Activated CD4-positive, alpha-beta T cell treated with anti-CD3 and anti-CD28 coated beads, Interleukin-2, amount 10 ng/mL, durations not matched to agents 24 days and 14 days (primary cell): ENCODE measurements at regions of chr10 and their contacts with region 1.

Region 1: DNA sequence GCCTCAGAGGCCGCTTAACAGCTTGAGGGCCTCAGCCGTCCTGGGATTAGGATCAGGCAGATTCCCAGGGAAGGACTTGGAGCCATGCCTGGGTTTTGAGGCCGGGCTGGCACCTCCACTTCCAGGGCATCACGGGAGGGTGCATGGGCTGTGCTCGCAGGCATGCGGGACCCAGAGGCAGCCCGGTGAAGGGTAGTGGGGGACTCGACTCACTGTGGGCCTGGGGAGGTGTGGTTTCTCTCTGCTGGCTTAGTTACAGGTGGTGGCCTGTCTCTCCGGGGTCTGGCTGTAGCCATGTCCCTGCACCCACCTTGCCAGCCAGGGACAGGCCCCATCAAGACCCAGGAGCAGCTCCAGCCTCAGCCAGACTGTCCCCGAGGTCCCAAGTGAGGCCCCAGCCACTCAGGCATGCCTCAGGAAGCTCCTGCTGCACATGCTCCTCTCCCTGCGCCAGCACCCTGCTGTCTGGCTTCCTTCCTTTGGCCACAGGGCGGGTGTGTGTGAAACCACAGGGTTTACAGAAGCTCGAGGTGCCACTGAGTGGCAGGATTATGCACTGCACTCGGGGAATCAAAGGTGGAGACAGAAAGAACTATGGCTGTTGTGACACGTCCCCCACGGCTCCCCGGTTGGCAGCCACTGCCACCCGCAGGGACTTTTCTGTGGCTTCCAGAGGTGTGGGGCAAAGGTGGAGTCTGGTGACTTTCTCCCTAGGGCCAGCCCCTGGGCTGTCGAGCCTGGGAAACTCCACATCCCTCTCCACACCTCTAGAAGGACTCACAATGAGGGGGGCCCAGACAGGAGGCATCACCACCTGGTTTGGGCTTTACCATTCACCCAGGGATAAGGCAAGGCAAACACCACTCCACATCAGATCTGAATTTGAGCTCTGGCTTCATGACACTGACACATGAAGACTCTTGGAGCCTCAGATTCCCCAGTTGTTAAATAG is 19.7 kb downstream of the GOLGA7B start:
- DNase-seq: peak; percentile 95
- H3K4me3 Mint-ChIP-seq: peak overlapping the region; percentile 41
- H3K27ac Mint-ChIP-seq: peak overlapping the region; percentile 51
- H3K4me1 Mint-ChIP-seq: peaks cover 11% of the 10 kb centered on the region
- H3K27me3 Mint-ChIP-seq: peaks cover 13% of the 10 kb centered on the region

Region 2: DNA sequence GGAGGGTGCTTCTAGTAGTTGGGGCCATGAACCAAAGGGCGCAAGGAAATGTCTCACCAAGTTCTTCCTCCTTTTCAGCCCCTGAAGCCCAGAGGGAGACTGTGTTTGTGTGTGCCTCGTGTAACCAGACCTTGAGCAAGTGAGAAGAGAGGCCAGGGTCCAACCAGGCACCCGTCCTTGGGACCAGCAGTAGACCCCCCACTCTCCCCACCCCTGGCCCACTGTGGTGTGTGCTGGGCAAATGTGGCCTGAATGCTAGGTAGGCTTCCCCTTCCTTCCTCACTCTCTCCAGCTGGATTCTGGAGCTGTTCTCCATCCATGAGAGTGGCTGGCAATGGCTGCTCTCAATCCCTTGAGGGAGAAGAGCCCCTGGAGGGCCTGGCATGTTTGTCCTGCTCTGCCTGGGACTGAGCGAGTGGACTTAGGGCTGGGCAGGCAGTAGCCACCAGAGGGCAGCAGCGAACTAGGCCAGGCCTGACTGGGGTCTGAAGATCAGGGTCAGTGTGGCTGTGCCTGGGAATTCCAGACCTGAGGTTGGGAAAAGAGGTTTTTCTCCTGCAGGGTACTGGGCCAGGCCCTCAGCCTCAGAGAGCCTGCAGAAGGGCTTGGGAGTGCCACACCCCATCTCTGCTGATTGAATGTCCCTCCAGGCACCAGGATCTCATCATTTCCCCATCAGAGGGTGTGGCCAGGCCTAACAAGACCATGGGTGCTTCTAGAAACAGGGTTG is 110.0 kb before region 1 on chr10:
- intact Hi-C with region 1: loop called (anchors 1 kb)
- DNase-seq: peak; percentile 83
- H3K4me3 Mint-ChIP-seq: no peak overlapping the region
- H3K27ac Mint-ChIP-seq: no peak overlapping the region
- H3K4me1 Mint-ChIP-seq: no peaks in the 10 kb centered on the region
- H3K27me3 Mint-ChIP-seq: no peaks in the 10 kb centered on the region

Region 3: GRCh38 chr10:97792141-97792721 is 77.1 kb before region 1 on chr10:
- intact Hi-C with region 1: loop called (anchors 1 kb)
- DNase-seq: peak; percentile 92
- H3K4me3 Mint-ChIP-seq: no peak overlapping the region
- H3K27ac Mint-ChIP-seq: no peak overlapping the region
- H3K4me1 Mint-ChIP-seq: peaks cover 21% of the 10 kb centered on the region
- H3K27me3 Mint-ChIP-seq: peaks cover 13% of the 10 kb centered on the region

Region 4: GRCh38 chr10:98125940-98126631 is 256.7 kb after region 1 on chr10:
- intact Hi-C with region 1: no loop called
- DNase-seq: no peak
- H3K4me3 Mint-ChIP-seq: no peak overlapping the region
- H3K27ac Mint-ChIP-seq: no peak overlapping the region
- H3K4me1 Mint-ChIP-seq: no peaks in the 10 kb centered on the region
- H3K27me3 Mint-ChIP-seq: peaks cover 38% of the 10 kb centered on the region